ENCODE measurements at regions of chr3 and their contacts with region 1.

Region 1: DNA sequence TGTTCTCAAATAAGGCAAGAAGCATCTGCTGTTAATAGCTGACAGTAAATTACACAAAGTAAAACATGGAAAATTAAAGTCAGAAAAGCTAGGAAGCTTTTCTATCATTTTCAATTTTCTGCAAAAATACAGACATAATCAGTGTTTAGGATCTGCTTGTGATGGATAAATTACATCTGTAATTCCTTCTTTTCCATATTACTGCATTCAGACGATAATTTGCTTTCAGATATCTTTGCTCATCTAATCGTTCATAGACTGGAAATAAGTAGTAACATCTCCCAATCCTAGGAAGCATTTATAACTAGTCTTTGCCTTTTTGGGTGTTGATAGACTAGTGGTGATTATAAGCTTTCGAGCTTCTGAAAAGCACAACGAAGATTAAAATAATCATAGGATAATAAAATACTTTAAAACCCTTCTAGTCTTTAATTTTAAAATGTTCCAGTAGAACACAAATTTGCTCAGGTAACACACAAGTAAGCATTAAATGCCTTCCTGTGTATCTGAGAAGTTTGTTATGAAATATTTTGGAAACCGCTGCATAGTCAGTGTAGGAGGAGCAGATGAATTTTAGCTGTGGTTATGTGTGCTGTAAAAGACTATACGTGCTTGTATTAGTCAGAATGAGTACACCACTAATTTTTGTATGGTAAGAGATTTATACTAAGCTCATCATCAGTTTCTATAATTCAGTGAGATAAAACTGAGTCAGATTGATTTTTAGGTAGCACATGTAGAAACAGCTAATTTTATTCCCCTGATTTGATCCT is 41.0 kb downstream of the MBNL1 start:
- DNase-seq: no peak
- H3K4me3 ChIP-seq: no peak overlapping the region
- H3K27me3 ChIP-seq: no peaks in the 10 kb centered on the region
- CTCF ChIP-seq: no peak

Region 2: GRCh38 chr3:151986767-151987166 is 323.0 kb before region 1 on chr3:
- CTCF ChIA-PET with region 1: no interaction called
- POLR2A ChIA-PET with region 1: interaction called, 10 read pairs
- DNase-seq: no peak
- H3K4me3 ChIP-seq: no peak overlapping the region
- H3K27me3 ChIP-seq: no peaks in the 10 kb centered on the region
- CTCF ChIP-seq: no peak

Region 3: DNA sequence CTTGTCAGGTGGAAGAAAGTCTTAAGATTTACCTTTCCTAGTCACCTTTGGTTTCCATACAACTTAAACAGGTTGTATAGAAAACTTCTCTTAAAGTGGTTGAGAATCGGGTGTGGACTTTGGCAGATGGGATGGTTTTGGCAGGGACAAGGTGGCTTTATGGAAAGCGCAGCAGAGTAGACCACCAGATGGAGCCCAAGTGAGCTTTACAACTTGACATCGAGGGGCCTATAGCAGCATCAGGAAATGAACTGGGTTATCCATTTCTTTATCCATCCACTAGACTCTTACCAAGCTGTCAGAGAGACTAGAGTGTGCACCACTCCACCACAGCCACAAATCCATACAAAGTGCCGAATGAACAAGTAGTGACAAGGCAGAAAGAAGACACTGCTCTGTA is 126.2 kb before region 1 on chr3:
- CTCF ChIA-PET with region 1: no interaction called
- POLR2A ChIA-PET with region 1: no interaction called
- DNase-seq: no peak
- H3K4me3 ChIP-seq: no peak overlapping the region
- H3K27me3 ChIP-seq: no peaks in the 10 kb centered on the region
- CTCF ChIP-seq: peak; percentile 20; the same call in 1 of the 2 replicates

Region 4: DNA sequence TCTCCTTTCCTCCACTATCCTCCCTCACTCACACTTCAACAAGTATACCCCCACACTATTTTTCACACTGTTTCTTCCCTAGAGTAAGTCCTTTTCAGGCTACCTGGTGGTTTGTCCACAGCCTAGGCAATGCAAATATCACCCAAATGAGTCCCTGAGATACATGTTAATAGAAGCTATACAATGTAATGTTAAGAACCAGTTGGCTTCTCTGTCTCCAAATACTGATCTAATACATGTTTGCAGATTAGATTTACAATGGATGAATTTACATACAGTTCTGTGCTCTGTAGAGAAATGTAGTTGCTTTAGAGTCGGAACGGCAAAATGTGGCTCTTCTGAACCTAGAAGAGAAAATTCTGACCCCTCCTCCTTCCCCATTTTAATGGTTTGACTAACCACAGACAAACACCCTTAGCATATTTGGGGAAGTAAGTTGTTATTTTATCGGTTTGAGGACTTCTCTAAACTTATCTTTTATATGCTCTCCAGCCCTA is 104.6 kb before region 1 on chr3:
- CTCF ChIA-PET with region 1: no interaction called
- POLR2A ChIA-PET with region 1: no interaction called
- DNase-seq: no peak
- H3K4me3 ChIP-seq: no peak overlapping the region
- H3K27me3 ChIP-seq: no peaks in the 10 kb centered on the region
- CTCF ChIP-seq: no peak

Region 5: DNA sequence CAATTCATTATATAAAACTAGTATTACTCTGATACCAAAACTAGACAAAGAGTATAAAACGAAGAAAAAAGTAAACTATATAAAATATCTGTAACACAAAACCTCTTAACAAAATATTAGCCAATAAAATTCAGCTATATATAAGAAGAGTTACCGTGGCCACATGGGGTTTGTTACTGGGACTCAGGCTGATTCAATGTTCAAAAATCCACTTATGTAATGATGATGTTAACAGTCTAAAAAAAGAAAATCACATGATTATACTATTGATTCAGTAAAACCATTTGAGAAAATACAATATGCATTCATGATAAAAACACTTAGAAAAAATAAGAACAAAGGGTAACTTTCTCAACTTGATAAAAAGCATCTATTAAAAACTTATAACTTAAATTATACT is 543.5 kb after region 1 on chr3:
- CTCF ChIA-PET with region 1: no interaction called
- POLR2A ChIA-PET with region 1: no interaction called
- DNase-seq: no peak
- H3K4me3 ChIP-seq: no peak overlapping the region
- H3K27me3 ChIP-seq: no peaks in the 10 kb centered on the region
- CTCF ChIP-seq: no peak